IMR-90 (cell line): ENCODE measurements at regions of chr1 and their contacts with region 1.

Region 1: GRCh38 chr1:84506002-84506728 is at the starts of genes GNG5 and SPATA1:
- DNase-seq: peak; percentile 95
- ATAC-seq: peak; percentile 94
- H3K4me3 ChIP-seq: peak within 1 kb of the TSS; percentile 92
- H3K27ac ChIP-seq: peak within 1 kb of the TSS; percentile 95
- H3K4me1 ChIP-seq: peaks cover 6% of the 10 kb centered on the region; the same call in 1 of the 2 replicates
- H3K27me3 ChIP-seq: no peaks in the 10 kb centered on the region
- CTCF ChIP-seq: 0 out of 2 replicates have a peak, but pooled peaks have one; percentile 1
- POLR2A ChIP-seq: peak; percentile 95
- RAD21 ChIP-seq: peak; percentile 0; the same call in 1 of the 2 replicates
- total RNA-seq, gene GNG5: 30.8 and 36.4 TPM in 2 replicates
- total RNA-seq, gene SPATA1: under 0.01 and 0.56 TPM in 2 replicates

Region 2: GRCh38 chr1:84143796-84144565 is 362.2 kb before region 1 on chr1 and contains the start of gene PRKACB:
- CTCF ChIA-PET with region 1: no interaction called
- POLR2A ChIA-PET with region 1: no interaction called
- dilution Hi-C with region 1: no loop called
- in situ Hi-C with region 1: no loop called
- intact Hi-C with region 1: loop called (anchors 5 kb)
- DNase-seq: peak; percentile 62
- ATAC-seq: peak; percentile 68
- H3K4me3 ChIP-seq: no peak within 1 kb of the TSS
- H3K27ac ChIP-seq: no peak within 1 kb of the TSS
- H3K4me1 ChIP-seq: peaks cover 5% of the 10 kb centered on the region
- H3K27me3 ChIP-seq: no peaks in the 10 kb centered on the region
- CTCF ChIP-seq: no peak
- POLR2A ChIP-seq: no peak
- RAD21 ChIP-seq: no peak
- total RNA-seq, gene PRKACB: 8.2 and 14.2 TPM in 2 replicates

Region 3: GRCh38 chr1:84525779-84526178 is 19.6 kb after region 1 on chr1:
- CTCF ChIA-PET with region 1: no interaction called
- POLR2A ChIA-PET with region 1: interaction called, 10 read pairs
- dilution Hi-C with region 1: no loop called
- in situ Hi-C with region 1: no loop called
- intact Hi-C with region 1: no loop called
- DNase-seq: no peak
- ATAC-seq: no peak
- H3K4me3 ChIP-seq: no peak overlapping the region
- H3K27ac ChIP-seq: no peak overlapping the region
- H3K4me1 ChIP-seq: no peaks in the 10 kb centered on the region
- H3K27me3 ChIP-seq: no peaks in the 10 kb centered on the region
- CTCF ChIP-seq: no peak
- POLR2A ChIP-seq: no peak
- RAD21 ChIP-seq: no peak

Region 4: DNA sequence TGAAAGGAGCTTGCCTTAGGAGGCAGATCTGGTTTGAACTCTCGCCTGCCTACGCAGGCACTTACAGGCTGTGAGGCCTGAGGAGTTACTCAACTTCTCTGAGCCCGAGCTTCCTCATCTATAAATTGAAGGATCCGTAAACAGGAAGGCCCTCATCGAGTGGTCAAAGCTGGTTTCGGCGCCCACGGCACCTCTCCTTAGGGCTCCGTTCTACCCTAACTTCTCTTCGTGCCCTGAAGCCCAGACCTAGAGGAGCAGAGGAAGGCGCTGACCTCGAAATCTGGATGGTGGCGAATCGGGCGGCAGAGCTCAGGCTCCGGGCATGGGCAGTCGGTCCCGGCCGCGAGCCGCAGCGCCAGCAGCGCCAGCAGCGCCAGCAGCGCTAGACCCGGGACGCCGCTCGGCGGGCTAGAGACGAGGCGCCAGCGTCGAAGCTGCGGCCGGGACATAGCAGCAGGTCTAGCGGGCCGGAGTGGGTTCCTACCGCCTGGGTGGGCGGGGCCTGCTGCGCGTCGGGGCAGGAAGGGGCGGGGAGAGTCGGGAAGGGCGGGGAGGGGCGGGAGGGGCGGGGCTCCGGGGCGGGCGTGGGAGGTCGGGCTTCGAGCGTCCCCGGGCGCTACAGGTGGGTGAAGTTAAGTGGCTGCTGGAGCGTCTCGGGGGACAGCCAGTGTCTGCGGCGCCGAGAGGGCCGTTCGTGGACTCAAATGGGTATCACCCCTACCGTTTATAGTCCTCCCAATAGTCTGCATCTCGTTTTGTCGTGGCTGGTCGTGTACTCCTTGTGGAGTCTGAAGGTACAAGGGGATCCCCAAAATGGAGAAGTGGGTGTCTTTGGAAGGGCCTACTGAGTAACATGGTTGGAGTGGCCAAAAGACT is 68.0 kb after region 1 on chr1 and contains the start of gene CTBS:
- CTCF ChIA-PET with region 1: no interaction called
- POLR2A ChIA-PET with region 1: interaction called, 5 read pairs
- dilution Hi-C with region 1: no loop called
- in situ Hi-C with region 1: no loop called
- intact Hi-C with region 1: loop called (anchors 1 kb)
- DNase-seq: peak; percentile 88
- ATAC-seq: peak; percentile 98
- H3K4me3 ChIP-seq: peak within 1 kb of the TSS; percentile 94
- H3K27ac ChIP-seq: peak within 1 kb of the TSS; percentile 97
- H3K4me1 ChIP-seq: peaks cover 2% of the 10 kb centered on the region; the same call in 1 of the 2 replicates
- H3K27me3 ChIP-seq: no peaks in the 10 kb centered on the region
- CTCF ChIP-seq: no peak
- POLR2A ChIP-seq: peak; percentile 85
- RAD21 ChIP-seq: 0 out of 2 replicates have a peak, but pooled peaks have one; percentile 3
- total RNA-seq, gene CTBS: 5.9 and 8.1 TPM in 2 replicates